Activated CD8-positive, alpha-beta memory T cell treated with anti-CD3 and anti-CD28 coated beads, Interleukin-2, amount 10 ng/mL, durations not matched to agents 7 days and 5 days (primary cell): ENCODE measurements at regions of chr17 and their contacts with region 1.

Region 1: DNA sequence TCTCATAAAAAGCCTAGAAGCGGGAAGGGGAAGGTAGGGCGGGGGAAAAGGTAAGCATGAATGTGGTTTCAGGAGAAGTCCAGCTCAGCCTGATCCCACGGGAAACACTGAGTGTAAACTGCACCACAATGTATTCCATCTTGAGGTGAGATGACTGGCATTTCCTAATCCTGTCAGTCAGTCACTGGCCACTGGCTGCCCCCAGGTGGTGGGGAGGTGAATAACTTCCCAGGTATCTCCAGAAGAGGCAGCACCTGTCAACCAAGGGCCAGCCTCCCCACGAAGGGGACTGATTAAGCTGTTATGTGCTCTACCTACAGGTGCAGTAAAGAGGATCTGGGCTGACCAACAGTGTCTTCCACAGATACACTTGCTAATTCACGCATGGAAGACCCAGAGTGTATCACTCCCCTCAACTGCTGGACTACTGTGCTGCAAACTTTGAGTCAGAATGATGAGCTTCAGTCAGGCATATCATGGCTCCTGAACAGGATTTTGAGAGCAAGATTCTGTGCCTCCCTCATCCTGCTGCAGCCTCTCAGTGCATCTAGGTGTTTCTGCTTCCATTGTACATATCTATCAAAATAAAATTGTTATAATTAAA is 108.5 kb upstream of the CCL2 start:
- DNase-seq: peak; percentile 73
- ATAC-seq: peak; percentile 42
- H3K4me3 Mint-ChIP-seq: no peak overlapping the region
- H3K27ac Mint-ChIP-seq: no peak overlapping the region
- H3K4me1 Mint-ChIP-seq: no peaks in the 10 kb centered on the region
- H3K27me3 Mint-ChIP-seq: peaks cover 12% of the 10 kb centered on the region

Region 2: DNA sequence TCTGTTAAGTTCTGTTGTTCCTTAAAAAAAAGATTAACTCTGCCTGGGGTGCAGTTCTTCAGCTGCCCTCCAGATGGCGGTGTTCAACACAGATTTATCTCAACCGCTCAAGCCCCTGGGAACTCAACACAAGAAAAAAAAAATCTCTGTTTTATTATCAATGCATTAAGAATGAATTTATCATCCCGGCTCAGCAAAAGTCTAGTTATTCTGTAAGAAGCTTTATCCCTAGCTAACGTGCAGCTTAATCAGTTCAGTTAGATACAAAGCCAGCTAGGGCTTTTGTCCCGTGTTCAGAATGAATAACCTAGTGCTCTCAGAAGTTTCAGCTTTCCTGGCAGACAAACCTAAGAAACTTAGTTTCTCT is 367.3 kb before region 1 on chr17:
- CTCF ChIA-PET with region 1: interaction called, 41 read pairs
- DNase-seq: peak; percentile 43
- ATAC-seq: no peak
- H3K4me3 Mint-ChIP-seq: no peak overlapping the region
- H3K27ac Mint-ChIP-seq: no peak overlapping the region
- H3K4me1 Mint-ChIP-seq: no peaks in the 10 kb centered on the region
- H3K27me3 Mint-ChIP-seq: peaks cover 2% of the 10 kb centered on the region